AG04449 (cell line): ENCODE measurements at regions of chr20 and their contacts with region 1.

Region 1: DNA sequence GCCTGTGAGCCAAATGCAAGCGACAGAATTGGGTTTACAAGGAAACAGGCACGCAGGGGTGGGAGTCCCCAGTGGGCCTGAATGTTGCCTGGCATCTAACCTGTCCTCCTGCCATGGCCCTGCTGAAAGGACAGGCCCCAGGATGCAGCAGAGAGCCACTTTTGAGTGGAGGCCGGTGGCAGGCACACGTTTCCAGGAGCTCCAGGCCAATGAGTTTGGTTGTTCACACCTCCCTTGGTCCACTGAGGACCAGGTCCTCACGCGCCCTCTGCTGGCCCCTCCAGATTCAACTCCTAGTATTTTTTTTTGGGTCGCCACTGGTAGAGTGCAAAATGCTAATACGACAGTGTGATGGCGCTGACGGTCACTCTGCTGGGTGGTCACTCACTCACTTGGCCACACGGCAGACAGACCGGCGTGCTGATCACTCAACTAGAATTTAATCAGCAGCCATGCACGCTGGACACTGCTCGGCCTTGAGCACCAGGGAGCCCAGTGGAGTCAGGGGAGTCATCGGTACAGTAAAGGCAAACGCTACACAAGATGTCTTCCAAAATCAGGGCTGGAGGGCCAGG is 81.7 kb upstream of the NFATC2 start:
- DNase-seq: no peak
- H3K4me3 ChIP-seq: no peak overlapping the region
- CTCF ChIP-seq: peak; percentile 73

Region 2: GRCh38 chr20:51385646-51386530 is 238.4 kb before region 1 on chr20:
- CTCF ChIA-PET with region 1: interaction called, 29 read pairs
- POLR2A ChIA-PET with region 1: no interaction called
- DNase-seq: no peak
- H3K4me3 ChIP-seq: no peak overlapping the region
- CTCF ChIP-seq: peak; percentile 70